Right ventricle myocardium inferior (tissue), 1 donor: ENCODE measurements at regions of chr20 and their contacts with region 1.

Region 1: DNA sequence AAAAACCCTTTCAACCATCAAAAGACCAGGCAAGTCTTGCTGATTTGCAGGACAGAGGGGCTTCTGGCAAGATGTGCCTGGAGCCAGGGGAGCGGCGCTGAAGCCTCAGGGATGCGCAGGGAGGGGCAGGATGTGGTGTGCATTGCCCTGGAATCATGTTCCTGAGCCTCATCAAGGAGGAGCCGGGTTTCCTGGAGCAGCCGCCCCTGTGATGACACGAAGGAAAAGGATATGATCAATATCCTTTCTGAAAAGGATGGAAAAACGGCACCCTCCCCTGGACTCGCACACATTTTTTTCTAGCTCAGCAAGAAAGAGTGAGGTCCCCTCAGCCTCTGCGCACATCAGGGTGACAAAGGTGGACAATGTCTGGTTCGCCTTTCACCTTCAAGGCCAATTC is 173.1 kb upstream of the SSTR4 start:
- DNase-seq: no peak
- ATAC-seq: no peak

Region 2: GRCh38 chr20:21027569-21027968 is 1834.4 kb before region 1 on chr20:
- intact Hi-C with region 1: no loop called
- DNase-seq: no peak
- ATAC-seq: no peak

Region 3: DNA sequence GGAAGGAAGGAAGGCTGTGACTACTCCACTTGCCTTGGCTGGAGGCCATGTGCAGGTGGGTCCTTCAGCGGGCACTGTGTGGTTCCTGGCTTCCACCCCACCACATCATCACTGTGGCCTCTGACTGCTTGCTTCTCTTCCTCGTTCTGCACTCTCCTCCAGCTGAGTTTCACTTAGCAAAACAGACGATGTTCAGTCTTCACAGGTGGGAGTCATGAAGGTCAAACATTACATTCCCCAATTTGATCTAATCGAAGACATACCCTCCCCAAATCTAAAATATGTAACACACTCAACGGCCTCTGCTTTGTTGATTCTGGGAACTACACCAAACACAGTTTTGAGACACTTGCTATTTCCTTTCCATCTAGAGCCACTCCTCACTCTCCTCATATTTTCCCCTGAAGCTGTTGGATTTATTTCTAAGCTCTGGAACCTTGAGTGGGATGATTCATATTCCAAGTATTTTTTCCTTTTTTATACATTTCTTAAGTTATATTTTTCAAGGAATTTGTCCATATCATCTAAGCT is 145.1 kb before region 1 on chr20:
- intact Hi-C with region 1: loop called (anchors 1 kb)
- DNase-seq: no peak
- ATAC-seq: no peak

Region 4: GRCh38 chr20:22977059-22977785 is 115.2 kb after region 1 on chr20:
- intact Hi-C with region 1: loop called (anchors 5 kb)
- DNase-seq: no peak
- ATAC-seq: peak; percentile 95

Region 5: DNA sequence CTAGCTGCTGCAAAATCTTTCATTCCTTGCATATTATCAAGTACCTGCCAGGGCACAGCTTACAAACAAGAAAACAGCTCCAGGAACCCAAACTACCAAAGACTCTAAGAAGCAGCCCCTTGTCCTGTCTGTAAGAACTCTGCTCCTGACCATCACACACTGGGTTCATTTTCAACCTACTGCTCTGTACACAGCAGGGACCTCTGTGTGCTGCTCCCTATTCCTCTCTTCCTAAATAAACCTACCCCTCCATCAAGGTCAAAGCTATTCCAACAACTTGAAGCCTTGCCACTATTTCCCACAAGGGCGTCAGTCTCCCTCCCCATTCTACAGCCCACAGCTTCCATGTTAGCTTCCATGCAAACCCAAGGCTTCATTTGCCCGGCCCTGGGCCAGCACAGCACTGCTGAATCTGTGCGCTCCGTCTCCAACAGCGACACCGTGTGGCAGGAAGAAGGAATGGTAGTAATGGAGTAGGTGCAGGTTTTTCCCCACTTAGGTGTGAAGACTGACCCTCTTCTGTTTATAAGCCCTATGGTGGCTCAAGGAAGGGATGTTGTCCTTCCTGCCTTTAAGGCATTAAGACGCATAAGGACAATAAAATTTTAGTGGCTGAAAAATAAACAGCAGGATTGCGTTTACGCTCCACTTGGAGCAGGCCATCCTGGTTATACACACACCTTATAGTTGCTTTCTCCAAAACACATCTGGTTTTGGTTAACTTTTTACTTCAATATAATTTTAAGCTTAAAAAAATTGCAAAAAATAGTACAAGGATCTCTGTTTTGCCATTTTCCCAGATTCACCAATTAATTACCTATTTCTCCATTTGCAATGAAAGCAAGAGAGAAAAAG is 373.4 kb after region 1 on chr20:
- intact Hi-C with region 1: loop called (anchors 10 kb)
- DNase-seq: peak; percentile 91
- ATAC-seq: peak; percentile 91